Left ventricle myocardium superior (tissue), 1 donor: ENCODE measurements at regions of chr19 and their contacts with region 1.

Region 1: GRCh38 chr19:18007044-18007916 is 690 bp upstream of the ARRDC2 start:
- DNase-seq: peak; percentile 90
- ATAC-seq: peak; percentile 88

Region 2: GRCh38 chr19:18057557-18057956 is 50.3 kb after region 1 on chr19:
- intact Hi-C with region 1: loop called (anchors 2 kb)
- DNase-seq: peak; percentile 58
- ATAC-seq: peak; percentile 65

Region 3: DNA sequence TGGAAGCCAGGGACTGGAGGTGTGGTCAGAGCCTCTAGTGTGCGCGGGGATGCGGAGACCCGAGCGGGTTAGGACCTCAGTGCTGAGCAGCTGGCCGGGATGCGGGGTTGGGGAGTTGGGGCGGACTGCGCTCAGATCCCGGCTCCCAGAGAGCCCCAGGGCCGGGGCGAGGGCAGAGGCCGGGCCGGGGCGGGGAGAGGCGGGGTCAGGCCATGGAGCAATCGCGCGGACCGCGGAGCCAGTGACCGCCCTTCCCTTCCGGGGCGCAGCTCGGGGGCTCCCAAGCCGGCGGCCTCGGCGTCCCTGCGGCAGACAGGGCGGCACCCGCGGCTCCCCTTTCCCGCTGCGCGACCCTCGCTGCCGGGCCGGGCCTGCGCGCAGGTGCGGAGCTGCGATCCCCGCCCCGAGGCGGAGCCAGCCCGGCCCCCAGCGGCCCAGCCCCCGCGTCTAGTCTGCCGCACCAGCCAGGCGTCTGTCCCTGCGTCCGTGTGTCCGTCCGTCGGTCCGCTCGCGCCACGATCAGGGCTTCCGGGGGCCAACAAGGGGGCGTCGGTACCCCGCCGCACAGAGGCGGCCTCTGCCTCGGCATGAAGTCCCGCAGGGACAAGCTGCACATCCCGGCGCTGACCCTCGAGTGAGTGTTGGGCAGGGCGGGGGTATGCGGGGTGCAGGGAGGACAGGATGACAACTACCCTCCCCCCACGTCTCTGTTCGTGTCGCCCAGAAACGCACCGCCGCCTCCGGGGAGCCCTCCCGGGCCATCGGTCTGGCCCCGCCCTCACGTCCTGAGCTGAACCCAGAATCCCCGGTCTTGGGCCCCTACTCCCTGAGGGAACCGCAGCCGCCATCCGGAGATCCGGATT is 102.7 kb after region 1 on chr19:
- intact Hi-C with region 1: no loop called
- DNase-seq: peak; percentile 79
- ATAC-seq: peak; percentile 82